A673 (cell line): ENCODE measurements at regions of chr2 and their contacts with region 1.

Region 1: DNA sequence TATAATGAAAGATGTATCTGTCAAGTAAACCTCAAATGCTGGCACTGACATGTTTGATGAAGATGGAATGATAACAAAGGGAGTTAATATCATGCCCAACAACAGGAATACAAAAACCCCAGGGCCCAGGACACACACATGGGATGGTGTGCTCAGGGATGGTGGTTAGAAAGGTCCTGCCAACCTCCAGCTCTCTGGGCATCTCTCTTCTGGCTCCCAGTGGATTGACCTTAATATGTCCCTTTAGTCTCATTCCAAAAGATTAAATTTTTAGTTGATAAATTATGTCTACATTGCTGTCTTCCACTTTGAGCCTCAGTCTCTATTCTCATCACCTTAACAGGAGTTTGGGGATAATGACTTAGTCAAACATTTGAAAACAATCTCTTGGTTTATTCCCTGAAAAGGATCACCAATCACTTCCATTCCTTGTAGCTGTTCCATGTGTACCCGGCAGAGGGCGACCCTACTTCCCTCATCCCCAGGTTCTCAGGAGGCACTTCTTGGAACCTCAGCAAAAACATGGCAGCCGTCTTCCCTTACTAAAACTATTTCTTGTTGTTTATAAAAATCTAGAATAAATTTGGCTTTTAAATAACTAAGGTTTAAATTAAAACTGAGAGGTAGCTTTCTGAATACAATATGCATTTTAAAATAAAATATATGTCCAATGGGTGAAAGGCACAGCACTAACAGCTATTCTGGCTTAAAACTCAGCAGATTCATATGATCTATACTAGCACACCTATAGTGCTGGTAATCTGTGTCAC is 29.6 kb downstream of the MCEE start:
- DNase-seq: peak; percentile 70
- H3K4me3 ChIP-seq: no peak overlapping the region
- H3K27ac ChIP-seq: no peak overlapping the region
- H3K4me1 ChIP-seq: no peaks in the 10 kb centered on the region
- H3K27me3 ChIP-seq: no peaks in the 10 kb centered on the region
- CTCF ChIP-seq: peak; percentile 80

Region 2: GRCh38 chr2:70248181-70248847 is 852.1 kb before region 1 on chr2 and contains the start of gene TIA1:
- CTCF ChIA-PET with region 1: no interaction called
- POLR2A ChIA-PET with region 1: no interaction called
- intact Hi-C with region 1: no loop called
- DNase-seq: peak; percentile 99
- H3K4me3 ChIP-seq: peak within 1 kb of the TSS; percentile 80
- H3K27ac ChIP-seq: peak within 1 kb of the TSS; percentile 98
- H3K4me1 ChIP-seq: peaks cover 4% of the 10 kb centered on the region
- H3K27me3 ChIP-seq: no peaks in the 10 kb centered on the region
- CTCF ChIP-seq: no peak
- total RNA-seq, gene TIA1: 185 and 197 TPM in 2 replicates

Region 3: GRCh38 chr2:71068218-71069035 is 32.0 kb before region 1 on chr2 and contains the start of gene NAGK:
- CTCF ChIA-PET with region 1: interaction called, 4 read pairs
- POLR2A ChIA-PET with region 1: interaction called, 14 read pairs
- intact Hi-C with region 1: no loop called
- DNase-seq: peak; percentile 98
- H3K4me3 ChIP-seq: peak within 1 kb of the TSS; percentile 54
- H3K27ac ChIP-seq: peak within 1 kb of the TSS; percentile 59
- H3K4me1 ChIP-seq: peaks cover 9% of the 10 kb centered on the region
- H3K27me3 ChIP-seq: no peaks in the 10 kb centered on the region
- CTCF ChIP-seq: no peak
- total RNA-seq, gene NAGK: 64.2 and 64.4 TPM in 2 replicates